ENCODE measurements at regions of chr10 and their contacts with region 1.

Region 1: DNA sequence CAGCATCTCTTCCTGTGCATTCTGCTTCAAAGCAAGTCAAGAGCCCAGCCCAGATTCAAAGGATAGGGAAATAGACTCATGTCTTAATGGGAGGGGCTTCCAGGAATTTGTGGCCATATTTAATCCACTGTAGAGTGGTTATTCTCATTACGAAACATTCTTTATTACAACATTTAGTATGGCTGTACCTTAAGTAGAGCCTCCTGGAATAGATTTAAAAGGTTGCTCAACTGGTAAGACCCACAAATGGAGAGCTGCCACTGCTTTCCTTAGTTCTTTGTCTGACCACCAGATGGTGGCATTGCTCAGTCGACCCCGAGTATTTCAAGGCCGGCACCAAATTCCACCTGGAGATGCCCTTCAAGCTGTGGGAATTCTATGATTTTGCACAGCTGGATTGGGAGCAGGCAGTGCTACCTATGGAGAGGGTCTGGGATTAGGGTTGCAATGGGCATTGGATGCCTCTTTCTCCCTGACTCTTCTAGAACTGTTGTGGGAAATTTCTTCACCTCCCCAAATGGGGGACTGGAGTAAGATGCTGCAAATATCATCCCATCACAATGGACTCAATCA is 102.2 kb downstream of the RBM20 start:
- DNase-seq: peak; percentile 63
- ATAC-seq: peak; percentile 93
- H3K4me3 ChIP-seq: no peak overlapping the region
- H3K27ac ChIP-seq: no peak overlapping the region
- H3K4me1 ChIP-seq: no peaks in the 10 kb centered on the region
- H3K27me3 ChIP-seq: no peaks in the 10 kb centered on the region; the same call in 1 of the 2 replicates
- CTCF ChIP-seq: peak; percentile 86 to 99 (median 93)
- POLR2A ChIP-seq: no peak
- RAD21 ChIP-seq: peak; percentile 99

Region 2: GRCh38 chr10:110893559-110894179 is 147.3 kb after region 1 on chr10:
- CTCF ChIA-PET with region 1: interaction called, 11 read pairs
- POLR2A ChIA-PET with region 1: no interaction called
- RAD21 ChIA-PET with region 1: interaction called, 5 to 8 read pairs
- intact Hi-C with region 1: loop called (anchors 1 kb)
- DNase-seq: peak; percentile 45
- ATAC-seq: peak; percentile 94
- H3K4me3 ChIP-seq: no peak overlapping the region
- H3K27ac ChIP-seq: no peak overlapping the region
- H3K4me1 ChIP-seq: no peaks in the 10 kb centered on the region
- H3K27me3 ChIP-seq: no peaks in the 10 kb centered on the region
- CTCF ChIP-seq: peak; percentile 56 to 78 (median 73)
- POLR2A ChIP-seq: no peak
- RAD21 ChIP-seq: peak; percentile 77

Region 3: GRCh38 chr10:111076191-111076681 is 329.9 kb after region 1 on chr10:
- CTCF ChIA-PET with region 1: interaction called, 5 read pairs
- POLR2A ChIA-PET with region 1: no interaction called
- RAD21 ChIA-PET with region 1: interaction called in 1 of 2 experiments, 5 read pairs
- intact Hi-C with region 1: loop called (anchors 10 kb)
- DNase-seq: peak; percentile 13
- ATAC-seq: peak; percentile 96
- H3K4me3 ChIP-seq: no peak overlapping the region
- H3K27ac ChIP-seq: no peak overlapping the region
- H3K4me1 ChIP-seq: no peaks in the 10 kb centered on the region; a peak in 1 of 4 replicates
- H3K27me3 ChIP-seq: peaks cover 36% of the 10 kb centered on the region; the same call in 1 of the 2 replicates
- CTCF ChIP-seq: peak; percentile 84 to 94 (median 85)
- POLR2A ChIP-seq: no peak
- RAD21 ChIP-seq: peak; percentile 93

Region 4: DNA sequence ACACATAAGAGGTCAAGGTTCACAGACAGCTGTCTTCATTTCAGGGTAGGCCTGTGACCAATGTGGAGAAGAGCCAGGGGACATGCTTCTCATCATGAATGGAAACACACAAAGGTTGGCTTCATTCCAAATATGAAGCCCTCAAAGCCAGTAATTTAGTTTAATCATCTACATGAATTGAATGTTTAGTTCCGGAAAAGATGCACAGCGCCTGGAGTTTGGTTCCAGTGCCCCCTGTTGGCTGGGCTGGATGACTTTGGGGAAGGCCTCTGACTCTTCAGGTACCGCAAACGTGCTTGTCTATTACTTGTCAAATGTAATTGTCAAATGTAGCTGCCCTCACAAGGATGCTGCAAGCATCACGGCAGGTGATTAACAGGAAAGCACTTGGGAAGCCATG is 461.2 kb after region 1 on chr10:
- CTCF ChIA-PET with region 1: no interaction called
- POLR2A ChIA-PET with region 1: no interaction called
- RAD21 ChIA-PET with region 1: no interaction called
- intact Hi-C with region 1: loop called (anchors 2 kb)
- DNase-seq: no peak
- ATAC-seq: peak; percentile 58
- H3K4me3 ChIP-seq: no peak overlapping the region
- H3K27ac ChIP-seq: no peak overlapping the region
- H3K4me1 ChIP-seq: no peaks in the 10 kb centered on the region
- H3K27me3 ChIP-seq: peaks cover 33% of the 10 kb centered on the region
- CTCF ChIP-seq: peak; percentile 44 to 58 (median 51); a peak in 5 of 6 replicates
- POLR2A ChIP-seq: no peak
- RAD21 ChIP-seq: peak; percentile 71

Region 5: DNA sequence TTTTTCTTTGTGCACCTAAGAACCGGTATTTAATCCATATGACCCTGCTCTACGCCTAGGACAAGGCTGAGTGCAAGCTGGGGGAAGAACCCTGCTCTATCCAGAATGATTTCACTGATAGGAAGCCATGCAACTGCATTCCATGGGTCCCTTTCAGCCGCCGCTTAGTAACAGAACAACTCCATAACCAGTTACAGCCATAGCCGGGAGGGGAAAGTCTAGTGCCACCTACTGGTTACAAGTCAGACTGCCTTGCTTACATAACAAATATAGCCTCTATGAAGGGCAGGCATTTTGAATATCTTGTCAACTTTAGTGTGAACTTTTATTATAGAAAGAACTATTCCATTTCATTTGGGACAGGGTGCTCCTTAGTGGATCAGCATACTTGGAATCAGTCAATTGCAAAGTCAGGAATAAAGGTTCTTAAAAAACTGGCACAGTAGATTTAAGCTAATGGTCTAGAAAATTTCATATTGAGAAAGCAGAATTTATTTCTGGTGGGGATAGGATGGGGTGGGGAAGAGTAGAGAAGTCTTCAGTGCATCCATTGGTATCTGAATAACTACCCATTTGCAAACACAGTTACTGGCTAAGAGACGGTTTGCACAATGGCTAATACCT is 852.2 kb after region 1 on chr10:
- CTCF ChIA-PET with region 1: interaction called, 3 read pairs
- POLR2A ChIA-PET with region 1: no interaction called
- RAD21 ChIA-PET with region 1: no interaction called
- intact Hi-C with region 1: loop called (anchors 5 kb)
- DNase-seq: peak; percentile 60
- ATAC-seq: peak; percentile 97
- H3K4me3 ChIP-seq: no peak overlapping the region
- H3K27ac ChIP-seq: no peak overlapping the region
- H3K4me1 ChIP-seq: no peaks in the 10 kb centered on the region
- H3K27me3 ChIP-seq: peaks cover 13% of the 10 kb centered on the region; the same call in 1 of the 2 replicates
- CTCF ChIP-seq: peak; percentile 65 to 98 (median 95); a peak in 5 of 6 replicates
- POLR2A ChIP-seq: no peak
- RAD21 ChIP-seq: peak; percentile 67